Tibial artery (tissue), 4 donors: ENCODE measurements at regions of chr18 and their contacts with region 1.

Region 1: DNA sequence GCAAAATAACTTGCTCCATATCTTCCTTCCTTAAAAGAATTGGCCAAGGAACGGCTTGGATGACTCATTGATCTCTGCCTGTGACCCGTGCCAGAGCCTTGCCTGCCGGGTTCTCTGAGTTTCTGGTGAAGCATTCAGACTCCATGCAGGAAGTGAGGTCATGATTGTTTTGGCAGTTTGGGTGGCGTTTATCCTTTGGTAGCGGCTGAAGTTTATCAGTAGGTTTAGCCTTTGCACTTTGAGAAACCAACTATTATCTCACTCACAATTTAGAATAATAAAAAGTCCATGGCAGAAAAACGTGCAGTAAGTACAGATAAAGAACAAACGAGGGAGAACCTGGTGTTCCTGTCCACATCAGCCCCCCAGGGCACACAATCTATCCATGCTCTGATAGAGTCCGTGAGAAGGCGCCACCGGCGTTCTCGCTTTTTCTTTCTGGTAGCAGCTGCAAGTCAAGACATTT is 15.0 kb upstream of the CTAGE1 start:
- DNase-seq: peak; percentile 90 to 93
- H3K4me3 ChIP-seq: peak overlapping the region; percentile 22 to 24
- H3K27ac ChIP-seq: peak overlapping the region; percentile 53 to 66
- H3K4me1 ChIP-seq: peaks cover 0 to 30% (median 16%) of the 10 kb centered on the region in 4 donors
- H3K27me3 ChIP-seq: no peaks in the 10 kb centered on the region
- CTCF ChIP-seq: no peak

Region 2: GRCh38 chr18:22238036-22238435 is 194.7 kb before region 1 on chr18:
- intact Hi-C with region 1: no loop called
- DNase-seq: no peak
- H3K4me3 ChIP-seq: no peak overlapping the region
- H3K27ac ChIP-seq: no peak overlapping the region
- H3K4me1 ChIP-seq: no peaks in the 10 kb centered on the region
- H3K27me3 ChIP-seq: no peaks in the 10 kb centered on the region
- CTCF ChIP-seq: no peak

Region 3: GRCh38 chr18:22465859-22466457 is 33.3 kb after region 1 on chr18:
- intact Hi-C with region 1: loop called (anchors 2 kb)
- DNase-seq: peak; percentile 75 to 85
- H3K4me3 ChIP-seq: peak overlapping the region in 1 of 2 donors; percentile 3
- H3K27ac ChIP-seq: peak overlapping the region; percentile 78 to 84
- H3K4me1 ChIP-seq: peaks cover 0 to 56% (median 38%) of the 10 kb centered on the region in 4 donors
- H3K27me3 ChIP-seq: no peaks in the 10 kb centered on the region
- CTCF ChIP-seq: no peak

Region 4: GRCh38 chr18:22483407-22483806 is 50.7 kb after region 1 on chr18:
- intact Hi-C with region 1: no loop called
- DNase-seq: no peak
- H3K4me3 ChIP-seq: no peak overlapping the region
- H3K27ac ChIP-seq: no peak overlapping the region
- H3K4me1 ChIP-seq: peaks cover 0 to 9% (median 7%) of the 10 kb centered on the region in 4 donors
- H3K27me3 ChIP-seq: no peaks in the 10 kb centered on the region
- CTCF ChIP-seq: no peak

Region 5: GRCh38 chr18:22494771-22495170 is 62.1 kb after region 1 on chr18:
- intact Hi-C with region 1: loop called (anchors 10 kb)
- DNase-seq: no peak
- H3K4me3 ChIP-seq: no peak overlapping the region
- H3K27ac ChIP-seq: peak overlapping the region; percentile 67 to 73
- H3K4me1 ChIP-seq: peaks cover 0 to 31% (median 10%) of the 10 kb centered on the region in 4 donors
- H3K27me3 ChIP-seq: no peaks in the 10 kb centered on the region
- CTCF ChIP-seq: no peak

Region 6: GRCh38 chr18:22632191-22632590 is 199.5 kb after region 1 on chr18:
- intact Hi-C with region 1: no loop called
- DNase-seq: no peak
- H3K4me3 ChIP-seq: no peak overlapping the region
- H3K27ac ChIP-seq: no peak overlapping the region
- H3K4me1 ChIP-seq: no peaks in the 10 kb centered on the region
- H3K27me3 ChIP-seq: no peaks in the 10 kb centered on the region
- CTCF ChIP-seq: no peak

Region 7: DNA sequence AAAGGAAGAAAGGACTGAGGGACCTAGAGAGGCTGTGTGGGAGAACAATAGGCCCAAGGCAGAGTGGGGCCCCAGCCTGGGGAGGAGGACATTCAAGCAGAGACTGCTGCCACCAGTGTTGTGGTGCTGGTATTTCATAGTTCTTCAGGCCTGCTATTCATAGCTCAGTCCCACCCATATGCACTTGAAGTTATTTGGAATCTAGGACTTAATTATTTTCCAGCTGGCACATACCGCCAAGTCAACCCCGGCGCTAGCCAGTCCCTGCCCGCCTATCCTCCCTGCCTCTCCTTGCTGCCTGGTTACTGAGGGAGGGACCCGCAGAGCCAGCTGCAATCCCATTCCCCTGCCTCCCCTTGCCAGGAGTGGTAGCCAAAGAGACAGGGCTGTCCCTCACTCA is 843.7 kb after region 1 on chr18:
- intact Hi-C with region 1: no loop called
- DNase-seq: no peak
- H3K4me3 ChIP-seq: no peak overlapping the region
- H3K27ac ChIP-seq: peak overlapping the region in 1 of 2 donors; percentile 37
- H3K4me1 ChIP-seq: peaks cover 0 to 27% (median 19%) of the 10 kb centered on the region in 4 donors
- H3K27me3 ChIP-seq: no peaks in the 10 kb centered on the region
- CTCF ChIP-seq: no peak